K562 (cell line): ENCODE measurements at regions of chr2 and their contacts with region 1.

Region 1: GRCh38 chr2:197310271-197310985 is at the start of gene ANKRD44:
- DNase-seq: peak; percentile 45 to 63 (median 54)
- ATAC-seq: peak; percentile 98
- H3K4me3 ChIP-seq: peak within 1 kb of the TSS; percentile 41
- H3K27ac ChIP-seq: no peak within 1 kb of the TSS
- H3K4me1 ChIP-seq: peaks cover 0 to 14% of the 10 kb centered on the region in 2 experiments; a peak in 2 of 5 replicates
- H3K27me3 ChIP-seq: peaks cover 15 to 19% of the 10 kb centered on the region in 2 experiments
- CTCF ChIP-seq: peak in 2 of 3 experiments; percentile 20 to 71; a peak in 3 of 6 replicates
- EP300 ChIP-seq: no peak
- POLR2A ChIP-seq: no peak
- RAD21 ChIP-seq: peak; percentile 30 to 55; a peak in 3 of 4 replicates
- polyA plus RNA-seq, gene ANKRD44: 0.10 TPM in 1 of 2 experiments, not detected in the other

Region 2: DNA sequence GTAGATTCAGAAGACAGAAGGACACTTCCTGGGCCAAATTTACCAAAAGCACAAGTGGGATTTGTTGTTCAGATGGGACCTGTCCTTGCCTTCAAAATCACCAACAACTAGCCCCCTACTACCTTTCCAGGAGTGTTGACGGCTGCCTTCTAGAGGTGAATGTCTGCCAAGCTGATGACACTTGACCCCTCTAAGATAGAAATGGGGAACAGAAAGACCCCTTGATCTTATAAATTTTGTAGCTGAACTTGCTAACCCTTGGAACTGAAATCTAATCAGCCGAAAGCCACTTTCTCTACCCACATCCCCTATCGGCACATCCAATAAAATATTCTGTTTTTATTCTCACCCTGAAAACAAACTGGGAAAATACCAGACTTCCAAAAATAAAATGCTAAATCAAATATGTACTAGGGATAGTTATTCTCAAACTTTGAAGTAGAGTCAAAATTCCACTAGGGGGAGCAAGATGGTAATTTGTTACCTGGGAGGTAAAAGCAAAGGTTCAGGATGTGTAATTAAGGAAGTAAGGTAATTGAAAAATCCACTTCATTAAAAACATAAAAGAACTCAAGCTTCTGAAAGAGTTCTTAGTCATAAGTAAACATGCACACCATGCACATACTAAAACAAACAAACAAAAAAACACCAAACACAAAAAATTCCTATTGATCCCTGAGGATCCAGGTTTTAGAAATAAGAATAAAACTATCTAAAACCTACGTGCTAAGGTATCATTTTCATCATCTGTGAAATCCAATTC is 119.1 kb before region 1 on chr2:
- CTCF ChIA-PET with region 1: interaction called, 3 read pairs
- POLR2A ChIA-PET with region 1: no interaction called
- in situ Hi-C with region 1: no loop called
- intact Hi-C with region 1: loop called (anchors 5 kb)
- DNase-seq: peak; percentile 26 to 35 (median 28)
- ATAC-seq: 0 out of 3 replicates have a peak, but pooled peaks have one; percentile 56
- H3K4me3 ChIP-seq: no peak overlapping the region
- H3K27ac ChIP-seq: no peak overlapping the region
- H3K4me1 ChIP-seq: no peaks in the 10 kb centered on the region
- H3K27me3 ChIP-seq: no peaks in the 10 kb centered on the region
- CTCF ChIP-seq: peak in 2 of 3 experiments; percentile 39 to 68; a peak in 4 of 6 replicates
- EP300 ChIP-seq: no peak
- POLR2A ChIP-seq: no peak
- RAD21 ChIP-seq: peak; percentile 69 to 76

Region 3: GRCh38 chr2:197453161-197453914 is 142.9 kb after region 1 on chr2 and contains the start of gene COQ10B:
- CTCF ChIA-PET with region 1: no interaction called
- POLR2A ChIA-PET with region 1: no interaction called
- in situ Hi-C with region 1: no loop called
- intact Hi-C with region 1: no loop called
- DNase-seq: peak; percentile 91 to 98 (median 94)
- ATAC-seq: peak; percentile 98
- H3K4me3 ChIP-seq: peak within 1 kb of the TSS; percentile 97
- H3K27ac ChIP-seq: peak within 1 kb of the TSS; percentile 99
- H3K4me1 ChIP-seq: peaks cover 0 to 3% of the 10 kb centered on the region in 2 experiments; a peak in 3 of 5 replicates
- H3K27me3 ChIP-seq: no peaks in the 10 kb centered on the region
- CTCF ChIP-seq: peak; percentile 15 to 46 (median 22); a peak in 2 of 6 replicates
- EP300 ChIP-seq: peak; percentile 30; the same call in 1 of the 2 replicates
- POLR2A ChIP-seq: peak; percentile 91
- RAD21 ChIP-seq: no peak
- polyA plus RNA-seq, gene COQ10B: 7.2 to 7.7 TPM

Region 4: DNA sequence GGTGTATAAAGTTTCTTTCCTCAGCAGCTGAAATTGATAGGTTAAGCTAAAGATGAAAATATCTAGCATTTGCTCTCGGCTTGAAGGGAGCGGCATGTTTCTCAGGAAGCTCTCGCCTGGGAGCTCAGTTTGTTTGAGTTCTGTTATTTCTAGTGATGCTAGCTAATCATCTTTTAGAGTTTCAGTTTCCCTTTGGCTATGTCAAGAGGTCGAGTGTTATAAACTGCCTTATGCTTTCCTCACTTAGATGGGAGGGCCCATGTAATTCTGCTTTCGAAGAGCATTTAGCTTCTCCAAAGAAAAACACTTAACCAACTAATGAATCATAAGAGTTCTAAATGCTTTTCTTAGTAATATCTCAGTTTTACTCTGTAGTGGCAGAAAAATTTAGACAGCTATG is 527.6 kb after region 1 on chr2:
- CTCF ChIA-PET with region 1: no interaction called
- POLR2A ChIA-PET with region 1: no interaction called
- in situ Hi-C with region 1: no loop called
- intact Hi-C with region 1: no loop called
- DNase-seq: no peak
- ATAC-seq: no peak
- H3K4me3 ChIP-seq: no peak overlapping the region
- H3K27ac ChIP-seq: no peak overlapping the region
- H3K4me1 ChIP-seq: no peaks in the 10 kb centered on the region; a peak in 1 of 5 replicates
- H3K27me3 ChIP-seq: no peaks in the 10 kb centered on the region
- CTCF ChIP-seq: no peak
- EP300 ChIP-seq: no peak
- POLR2A ChIP-seq: no peak
- RAD21 ChIP-seq: no peak

Region 5: DNA sequence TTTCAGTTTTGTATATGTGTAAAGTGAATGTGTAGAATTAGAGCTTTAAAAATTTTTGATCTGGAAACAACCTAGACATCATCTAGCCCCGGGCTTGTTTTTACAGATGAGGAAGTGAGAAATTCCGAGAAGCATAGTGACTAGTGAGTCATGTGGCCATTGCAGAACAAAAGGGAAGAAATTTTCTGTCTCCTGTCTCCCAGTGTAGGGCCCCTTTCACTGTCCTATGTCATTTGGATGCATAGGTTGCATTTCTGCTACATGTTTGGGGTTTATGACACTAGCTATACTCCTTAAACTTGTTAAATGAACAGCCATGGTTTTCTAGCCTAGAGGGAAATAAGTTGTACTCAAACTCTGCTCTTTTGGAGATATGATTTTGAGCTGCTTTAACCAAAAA is 578.6 kb after region 1 on chr2:
- CTCF ChIA-PET with region 1: no interaction called
- POLR2A ChIA-PET with region 1: no interaction called
- in situ Hi-C with region 1: no loop called
- intact Hi-C with region 1: no loop called
- DNase-seq: peak in 3 of 4 experiments; percentile 21 to 77 (median 50)
- ATAC-seq: peak; percentile 79
- H3K4me3 ChIP-seq: no peak overlapping the region
- H3K27ac ChIP-seq: peak overlapping the region; percentile 84
- H3K4me1 ChIP-seq: peaks cover 4 to 37% of the 10 kb centered on the region in 2 experiments; a peak in 3 of 5 replicates
- H3K27me3 ChIP-seq: no peaks in the 10 kb centered on the region
- CTCF ChIP-seq: no peak
- EP300 ChIP-seq: peak; percentile 49; the same call in 1 of the 2 replicates
- POLR2A ChIP-seq: 0 out of 2 replicates have a peak, but pooled peaks have one; percentile 29
- RAD21 ChIP-seq: no peak